ENCODE measurements at regions of chr7 and their contacts with region 1.

Region 1: DNA sequence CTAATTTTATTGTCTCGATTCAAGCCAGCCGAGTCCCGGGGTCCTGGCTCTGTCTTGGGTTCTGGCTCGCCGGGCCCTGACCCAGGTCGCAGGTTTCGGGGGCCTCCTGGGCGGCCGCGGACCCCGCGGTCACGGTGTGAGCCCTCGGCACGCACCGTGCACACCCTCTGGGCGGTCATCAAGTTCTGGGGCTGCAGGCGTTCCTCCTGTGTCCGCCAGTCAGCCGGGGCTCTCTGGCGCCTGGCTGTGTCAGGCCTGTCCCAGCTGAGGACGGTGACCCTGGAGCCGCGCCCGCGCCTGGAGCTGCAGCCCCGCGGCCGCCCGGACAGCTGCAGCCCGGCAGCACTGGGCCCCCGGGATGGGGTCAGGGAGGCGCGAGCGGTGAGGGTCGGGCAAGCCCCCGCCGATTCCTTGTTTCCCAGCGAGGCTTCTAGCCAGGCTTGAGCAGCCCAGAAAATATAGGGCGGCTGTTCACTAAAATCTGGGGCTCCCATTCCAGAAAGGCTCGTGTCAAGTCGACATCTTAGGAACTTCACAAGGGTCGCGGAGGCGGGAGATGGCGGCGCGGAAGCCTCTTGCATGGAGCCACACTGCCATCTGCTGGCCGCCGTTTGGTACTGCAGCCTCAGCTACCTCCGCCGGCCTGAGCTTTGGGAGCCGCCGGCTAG is 4.2 kb upstream of the HOXA7 start:
- DNase-seq: peak; percentile 96
- H3K4me3 ChIP-seq: peak overlapping the region; percentile 54 to 87 (median 61)
- H3K27ac ChIP-seq: peak overlapping the region in 7 of 8 donors; percentile 5 to 65 (median 49)
- H3K4me1 ChIP-seq: peaks cover 16 to 96% (median 63%) of the 10 kb centered on the region in 6 donors
- H3K27me3 ChIP-seq: peaks cover 8 to 100% (median 93%) of the 10 kb centered on the region in 7 donors
- CTCF ChIP-seq: peak; percentile 95 to 100 (median 99)
- POLR2A ChIP-seq: no peak

Region 2: GRCh38 chr7:25862260-25863037 is 1298.2 kb before region 1 on chr7:
- intact Hi-C with region 1: loop called (anchors 10 kb)
- DNase-seq: peak; percentile 92
- H3K4me3 ChIP-seq: peak overlapping the region in 3 of 8 donors; percentile 1 to 53 (median 3)
- H3K27ac ChIP-seq: no peak overlapping the region
- H3K4me1 ChIP-seq: peaks cover 4 to 32% (median 14%) of the 10 kb centered on the region in 6 donors
- H3K27me3 ChIP-seq: peaks cover 12 to 100% (median 100%) of the 10 kb centered on the region in 7 donors
- CTCF ChIP-seq: no peak
- POLR2A ChIP-seq: no peak

Region 3: GRCh38 chr7:26681819-26682418 is 478.8 kb before region 1 on chr7:
- intact Hi-C with region 1: loop called (anchors 5 kb)
- DNase-seq: no peak
- H3K4me3 ChIP-seq: no peak overlapping the region
- H3K27ac ChIP-seq: no peak overlapping the region
- H3K4me1 ChIP-seq: peaks cover 0 to 35% (median 8%) of the 10 kb centered on the region in 6 donors
- H3K27me3 ChIP-seq: no peaks in the 10 kb centered on the region
- CTCF ChIP-seq: peak; percentile 35 to 90 (median 68)
- POLR2A ChIP-seq: no peak